ENCODE measurements at regions of chr12 and their contacts with region 1.

Region 1: DNA sequence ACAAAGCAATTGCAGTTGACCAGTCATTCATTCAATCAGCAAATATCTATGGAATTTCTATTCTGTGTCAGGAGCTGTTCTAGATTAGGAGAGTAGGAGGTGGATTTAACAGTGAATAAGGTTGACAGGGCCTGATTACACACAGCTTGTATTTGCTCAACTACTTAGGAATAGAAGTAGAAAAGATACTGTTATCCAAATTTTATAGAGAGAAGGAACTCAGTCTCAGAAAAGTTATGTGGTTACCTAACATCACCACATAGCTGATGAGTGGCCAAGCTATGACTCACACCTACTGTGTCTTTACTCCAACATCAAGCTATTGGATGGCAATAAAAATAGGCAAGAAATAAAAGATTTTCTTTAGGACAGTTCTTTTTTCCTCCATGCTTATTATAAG is 374.8 kb downstream of the RMST start:
- DNase-seq: no peak

Region 2: GRCh38 chr12:97778111-97778510 is 59.3 kb before region 1 on chr12:
- intact Hi-C with region 1: loop called in 1 of 2 experiments (anchors 2 kb)
- DNase-seq: no peak

Region 3: GRCh38 chr12:97797473-97797872 is 39.9 kb before region 1 on chr12:
- intact Hi-C with region 1: no loop called
- DNase-seq: no peak

Measured in posterior vena cava (tissue), 2 donors.